Cardiac septum (tissue), 1 donor: ENCODE measurements at regions of chr4 and their contacts with region 1.

Region 1: DNA sequence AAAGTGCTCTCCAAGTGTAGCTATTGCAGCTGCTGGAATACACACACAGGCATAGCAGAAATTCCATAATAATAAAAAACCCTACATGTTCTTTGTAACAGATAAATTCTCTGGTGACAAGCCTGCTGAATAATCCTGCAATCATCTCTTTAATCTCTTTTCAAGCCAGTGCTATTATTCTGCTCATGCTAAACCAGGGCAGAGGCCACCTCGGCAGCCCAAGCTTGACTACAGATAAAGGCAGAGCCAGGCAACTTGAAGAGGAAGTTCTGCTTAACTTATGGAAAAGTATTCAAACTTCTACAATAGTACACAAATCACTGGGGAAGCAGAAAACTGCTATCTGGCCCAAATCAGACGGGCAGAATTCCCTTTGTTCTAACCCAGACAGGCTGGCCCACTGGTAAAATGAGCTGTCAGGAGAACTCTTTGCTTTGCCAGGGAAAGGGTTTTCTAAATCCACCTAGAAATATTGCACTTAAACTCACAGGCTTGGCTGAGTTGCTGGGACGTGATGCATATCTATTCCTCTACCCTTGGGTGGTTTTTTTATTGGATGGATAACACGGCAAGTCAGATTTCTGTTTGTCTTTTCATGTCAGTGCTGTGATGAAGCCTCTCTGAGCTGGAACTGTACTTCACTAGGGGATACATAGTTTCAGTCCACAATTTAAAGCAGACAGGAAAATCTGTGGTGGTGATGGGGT is 70.5 kb downstream of the GATB start:
- DNase-seq: no peak

Region 2: GRCh38 chr4:151744614-151745013 is 54.3 kb after region 1 on chr4:
- intact Hi-C with region 1: loop called (anchors 2 kb)
- DNase-seq: no peak

Region 3: GRCh38 chr4:151841107-151841506 is 150.8 kb after region 1 on chr4:
- intact Hi-C with region 1: no loop called
- DNase-seq: no peak

Region 4: DNA sequence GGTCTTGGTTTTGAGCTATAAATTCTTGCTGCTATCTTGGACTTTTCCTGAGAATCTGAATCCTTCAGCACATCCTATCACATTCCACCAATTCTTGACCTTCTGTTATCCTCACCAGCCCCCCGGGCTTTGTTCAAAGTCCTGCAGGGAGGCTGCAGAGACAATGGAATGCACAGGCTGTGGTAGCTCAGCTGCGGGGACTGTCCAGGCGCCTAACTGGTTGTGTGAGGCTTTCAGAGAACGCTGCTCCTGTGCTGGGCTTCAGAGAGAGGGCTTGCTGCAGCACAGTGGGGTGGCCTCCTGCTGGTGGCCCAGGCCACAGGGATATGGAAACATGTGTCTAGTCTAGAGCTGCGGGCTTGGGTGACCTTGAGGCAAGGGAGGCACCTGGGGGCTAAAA is 266.8 kb after region 1 on chr4:
- intact Hi-C with region 1: loop called (anchors 5 kb)
- DNase-seq: no peak